ENCODE measurements at regions of chr12 and their contacts with region 1.

Region 1: GRCh38 chr12:12837025-12837872 is 24.1 kb downstream of the DDX47 start:
- DNase-seq: peak; percentile 78
- H3K4me3 Mint-ChIP-seq: no peak overlapping the region
- H3K27ac Mint-ChIP-seq: peak overlapping the region; percentile 54
- H3K4me1 Mint-ChIP-seq: peaks cover 52% of the 10 kb centered on the region
- H3K27me3 Mint-ChIP-seq: no peaks in the 10 kb centered on the region

Region 2: GRCh38 chr12:12813120-12814101 is 23.8 kb before region 1 on chr12 and contains the start of gene DDX47:
- CTCF ChIA-PET with region 1: interaction called, 7 read pairs
- intact Hi-C with region 1: loop called (anchors 1 kb)
- DNase-seq: peak; percentile 99
- H3K4me3 Mint-ChIP-seq: peak within 1 kb of the TSS; percentile 99
- H3K27ac Mint-ChIP-seq: peak within 1 kb of the TSS; percentile 93
- H3K4me1 Mint-ChIP-seq: peaks cover 57% of the 10 kb centered on the region
- H3K27me3 Mint-ChIP-seq: no peaks in the 10 kb centered on the region
- total RNA-seq, gene DDX47: 86.6 to 87.3 TPM

Region 3: DNA sequence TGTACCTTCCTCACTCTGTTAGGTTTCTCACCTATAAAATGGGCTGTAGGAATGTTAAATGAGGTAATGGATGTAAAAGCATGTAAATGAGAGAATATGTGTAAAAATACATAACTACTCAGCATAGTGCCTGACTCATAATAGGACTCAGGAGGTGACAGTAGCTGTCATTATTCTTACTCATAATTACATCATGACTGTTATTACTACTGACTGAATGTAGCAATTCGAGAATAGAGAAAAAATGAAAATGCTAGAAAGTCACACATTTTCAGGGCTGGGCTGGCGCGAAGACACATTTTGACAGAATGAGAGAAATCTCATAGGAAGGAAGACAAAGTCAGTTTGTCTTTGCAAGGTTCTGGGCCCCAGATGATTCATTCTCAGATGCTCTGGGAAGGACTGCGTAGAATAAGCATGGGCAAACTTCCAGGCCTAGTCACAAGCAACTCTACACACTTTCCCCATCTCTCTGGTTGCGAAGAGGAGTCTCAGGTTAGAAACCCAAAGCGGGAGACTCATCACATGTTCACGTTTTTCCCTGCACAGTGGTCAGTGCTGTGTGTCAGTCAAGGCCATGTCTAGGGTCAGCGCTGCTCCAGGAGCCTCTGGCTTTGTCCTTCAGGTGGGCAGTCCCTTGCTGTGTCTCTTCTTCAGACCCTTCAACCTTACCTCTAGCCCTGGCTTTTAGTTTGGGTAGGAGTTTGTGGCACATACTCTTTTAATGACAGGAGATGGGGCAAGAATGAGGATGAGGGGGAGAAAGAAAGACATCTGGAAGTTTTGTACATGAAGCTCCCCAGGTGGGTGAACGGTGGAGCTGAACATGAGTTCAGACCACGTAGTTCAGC is 62.5 kb after region 1 on chr12:
- CTCF ChIA-PET with region 1: interaction called, 3 read pairs
- intact Hi-C with region 1: loop called (anchors 1 kb)
- DNase-seq: peak; percentile 91
- H3K4me3 Mint-ChIP-seq: no peak overlapping the region
- H3K27ac Mint-ChIP-seq: peak overlapping the region; percentile 90
- H3K4me1 Mint-ChIP-seq: peaks cover 31% of the 10 kb centered on the region
- H3K27me3 Mint-ChIP-seq: peaks cover 4% of the 10 kb centered on the region

Region 4: GRCh38 chr12:12975322-12976077 is 138.3 kb after region 1 on chr12:
- CTCF ChIA-PET with region 1: interaction called, 6 read pairs
- intact Hi-C with region 1: loop called (anchors 2 kb)
- DNase-seq: peak; percentile 49
- H3K4me3 Mint-ChIP-seq: no peak overlapping the region
- H3K27ac Mint-ChIP-seq: no peak overlapping the region
- H3K4me1 Mint-ChIP-seq: no peaks in the 10 kb centered on the region
- H3K27me3 Mint-ChIP-seq: no peaks in the 10 kb centered on the region

Region 5: DNA sequence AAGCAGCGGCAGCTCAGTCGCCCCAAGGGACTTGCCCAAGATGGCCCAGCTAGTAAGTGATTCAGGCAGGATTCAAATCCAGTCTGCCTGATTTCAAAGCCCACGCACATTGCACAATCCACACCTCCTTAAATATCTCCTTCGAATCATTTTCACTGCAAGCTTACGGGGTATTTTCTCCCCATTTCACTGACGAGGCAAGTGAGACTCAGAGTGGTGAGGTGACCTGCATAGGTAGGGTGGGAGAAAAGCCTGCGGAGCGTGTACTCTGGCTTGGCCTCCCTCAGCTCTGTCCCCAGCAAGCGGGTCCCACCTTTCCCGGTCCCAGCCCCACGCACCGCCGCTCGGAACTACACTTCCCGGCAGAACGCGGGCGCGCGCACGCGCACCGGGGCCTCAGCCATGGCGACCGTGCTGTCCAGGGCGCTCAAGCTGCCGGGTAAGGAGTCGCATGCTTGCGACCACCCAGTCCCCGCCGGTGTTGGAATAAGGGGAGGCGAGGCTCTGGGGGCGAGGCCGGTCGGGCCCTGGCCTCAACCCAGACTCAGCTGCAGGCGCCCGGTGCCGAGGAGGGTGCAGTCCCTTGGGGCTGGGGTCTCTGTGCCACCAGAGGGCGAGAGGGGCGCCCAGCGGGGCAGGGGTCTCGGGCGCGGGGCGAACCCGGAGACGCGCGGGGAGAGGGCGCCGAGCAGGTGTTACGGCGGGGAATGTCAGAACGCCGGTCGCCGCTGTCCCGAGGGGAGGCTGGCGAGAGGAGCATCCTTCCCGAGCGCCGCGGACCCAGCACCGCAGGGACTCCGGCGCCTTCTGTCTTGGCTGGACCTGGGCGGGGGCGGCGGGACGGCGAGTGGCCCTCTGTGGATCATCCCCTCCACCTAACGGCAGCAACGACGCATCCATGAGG is 207.0 kb after region 1 on chr12 and contains the start of gene FAM234B:
- CTCF ChIA-PET with region 1: no interaction called
- intact Hi-C with region 1: loop called (anchors 5 kb)
- DNase-seq: peak; percentile 73
- H3K4me3 Mint-ChIP-seq: peak within 1 kb of the TSS; percentile 79
- H3K27ac Mint-ChIP-seq: no peak within 1 kb of the TSS
- H3K4me1 Mint-ChIP-seq: peaks cover 16% of the 10 kb centered on the region
- H3K27me3 Mint-ChIP-seq: no peaks in the 10 kb centered on the region
- total RNA-seq, gene FAM234B: 7.4 to 7.7 TPM

Region 6: GRCh38 chr12:13211859-13212664 is 374.8 kb after region 1 on chr12:
- CTCF ChIA-PET with region 1: interaction called, 12 read pairs
- intact Hi-C with region 1: loop called (anchors 1 kb)
- DNase-seq: peak; percentile 86
- H3K4me3 Mint-ChIP-seq: no peak overlapping the region
- H3K27ac Mint-ChIP-seq: no peak overlapping the region
- H3K4me1 Mint-ChIP-seq: peaks cover 20% of the 10 kb centered on the region
- H3K27me3 Mint-ChIP-seq: peaks cover 2% of the 10 kb centered on the region